ENCODE measurements at regions of chr2 and their contacts with region 1.

Region 1: DNA sequence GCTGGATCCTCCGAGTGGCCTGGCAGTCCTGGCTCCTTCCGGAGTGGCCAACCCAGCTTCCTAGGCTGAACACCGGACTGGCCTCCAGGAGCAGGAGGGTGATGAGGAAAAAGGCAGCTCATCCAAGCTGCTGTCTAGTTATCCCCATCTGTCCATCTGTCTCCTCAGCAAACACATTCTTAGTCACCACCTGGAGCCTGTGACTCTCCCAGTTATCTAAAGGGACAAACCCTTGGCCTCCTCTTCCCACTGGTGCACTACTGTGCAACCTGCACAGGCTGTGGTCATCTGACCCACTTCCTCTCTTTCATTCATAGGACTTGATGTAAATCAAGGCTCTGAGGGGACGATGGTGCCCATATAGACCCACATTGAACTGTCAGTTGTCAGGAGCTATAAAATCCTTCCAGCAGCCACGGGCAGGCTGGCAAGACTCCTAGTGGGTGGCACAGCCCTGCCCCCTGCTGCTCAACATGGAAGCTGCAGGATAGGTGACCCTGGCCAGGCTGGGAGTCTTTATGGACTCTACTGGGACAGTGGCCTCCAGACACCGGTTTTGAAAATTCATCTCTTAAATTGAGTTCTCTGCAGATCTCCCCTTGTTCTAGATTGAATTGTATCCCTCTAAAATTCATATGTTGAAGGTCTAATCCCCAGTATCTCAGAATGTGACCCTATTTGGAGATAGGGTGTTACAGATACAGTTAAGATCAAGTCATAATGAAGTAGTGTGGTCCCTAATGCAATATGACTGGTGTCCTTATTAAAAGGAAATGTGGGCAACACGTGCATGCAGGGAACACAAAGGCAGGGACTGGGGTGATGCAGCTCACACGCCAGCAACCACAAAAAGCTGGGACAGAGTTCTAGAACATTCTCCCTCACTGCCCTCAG is 29.3 kb upstream of the DUSP2 start:
- DNase-seq: peak; percentile 55 to 97 (median 82)

Region 2: DNA sequence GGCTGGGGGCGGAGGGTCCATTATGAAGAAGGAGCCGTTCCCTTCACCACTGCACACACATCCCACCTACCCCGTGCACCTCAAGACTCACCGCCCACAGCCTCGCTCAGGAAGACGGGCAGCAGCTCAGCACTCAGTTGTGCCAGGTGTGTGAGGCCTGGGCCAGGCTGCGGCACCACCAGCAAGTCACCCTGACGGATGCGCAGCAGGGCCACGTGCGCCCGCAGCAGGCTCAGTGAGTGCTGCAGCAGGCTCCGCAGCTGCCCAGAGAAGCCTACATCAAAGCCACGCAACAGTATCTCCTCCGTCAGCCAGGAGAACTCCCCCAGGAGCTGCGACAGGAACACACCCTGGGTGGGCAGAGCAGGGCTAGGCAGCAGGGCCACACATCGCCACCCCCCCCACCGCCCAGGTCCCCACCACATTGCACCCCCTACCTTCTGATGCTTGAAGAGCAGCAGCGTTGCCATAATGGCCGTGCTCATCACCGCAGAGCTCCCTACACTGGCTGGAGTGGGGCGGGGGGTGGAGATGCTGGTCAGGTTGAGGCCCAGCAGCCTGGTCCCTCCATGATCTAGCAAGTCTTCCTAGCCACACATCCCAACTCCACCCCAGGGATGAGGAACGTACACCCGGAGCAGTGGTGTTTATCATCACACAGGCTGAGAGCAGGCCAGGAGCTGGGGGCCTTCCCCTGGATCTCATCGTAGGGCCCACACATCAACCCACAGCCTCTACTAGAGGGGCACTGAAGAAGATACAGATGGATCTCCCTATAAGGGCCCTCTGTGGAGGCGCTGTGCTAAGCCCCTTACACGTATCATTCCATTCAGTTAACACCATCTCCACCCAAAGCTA is 149.9 kb before region 1 on chr2:
- intact Hi-C with region 1: loop called (anchors 10 kb)
- DNase-seq: peak in 5 of 10 donors; percentile 55 to 92 (median 84)

Region 3: GRCh38 chr2:96138179-96139145 is 36.0 kb before region 1 on chr2 and contains the start of gene ASTL:
- intact Hi-C with region 1: loop called (anchors 2 kb)
- DNase-seq: peak in 4 of 10 donors; percentile 32 to 90 (median 65)